Activated CD4-positive, alpha-beta memory T cell treated with anti-CD3 and anti-CD28 coated beads for 36 hours (primary cell): ENCODE measurements at regions of chr15 and their contacts with region 1.

Region 1: DNA sequence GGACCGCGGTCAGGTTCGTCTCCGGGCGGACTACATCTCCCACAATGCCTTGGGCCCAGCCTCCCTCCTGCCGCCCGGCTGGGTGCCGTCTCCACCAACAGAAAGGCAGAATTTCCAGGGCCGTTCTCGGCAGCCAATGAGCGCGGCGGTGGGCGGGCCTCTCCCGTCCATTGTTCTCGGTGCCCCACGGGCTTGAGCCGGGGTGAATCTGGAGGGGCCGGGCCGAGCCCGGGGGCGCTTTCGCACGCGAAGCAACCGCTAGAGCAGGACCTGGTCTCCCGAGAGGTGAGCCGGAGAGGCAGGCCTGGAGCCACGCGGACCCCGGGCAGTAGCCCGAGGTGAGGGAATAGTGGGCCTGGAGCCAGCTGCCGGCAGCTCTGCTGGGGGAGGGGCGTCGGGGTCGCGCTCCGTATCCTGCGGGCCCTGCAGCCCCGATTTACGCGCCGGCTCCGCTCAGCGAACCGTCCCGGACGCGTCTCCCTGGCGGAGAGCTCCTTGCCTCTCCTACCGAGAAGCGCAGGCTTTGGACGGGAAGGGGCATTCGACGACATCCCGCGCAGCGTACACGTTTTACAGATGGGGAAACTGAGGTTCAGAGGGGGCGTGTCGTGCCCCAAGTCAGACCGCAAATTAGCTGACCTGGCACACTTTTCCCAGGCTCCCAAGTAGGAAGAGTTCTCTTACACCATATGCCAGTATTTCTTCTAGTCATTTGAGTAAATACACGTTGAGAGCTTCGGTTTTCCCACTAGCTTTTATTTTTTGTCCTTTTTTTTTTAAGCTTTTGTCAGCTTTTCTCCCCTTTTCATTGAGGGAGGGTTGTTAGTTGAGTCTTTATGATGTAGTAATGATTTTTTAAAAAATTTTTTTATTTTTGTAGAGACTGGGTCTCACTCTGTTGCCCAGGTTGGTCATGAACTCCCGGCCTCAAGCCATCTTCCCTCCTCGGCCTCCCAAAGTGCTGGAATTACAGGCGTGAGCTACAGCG is at the start of gene ZSCAN2:
- DNase-seq: peak; percentile 97
- H3K4me3 Mint-ChIP-seq: peak within 1 kb of the TSS; percentile 91
- H3K27ac Mint-ChIP-seq: no peak within 1 kb of the TSS
- H3K4me1 Mint-ChIP-seq: peaks cover 59% of the 10 kb centered on the region
- H3K27me3 Mint-ChIP-seq: no peaks in the 10 kb centered on the region
- total RNA-seq, gene ZSCAN2: 7.5 to 9.5 TPM

Region 2: DNA sequence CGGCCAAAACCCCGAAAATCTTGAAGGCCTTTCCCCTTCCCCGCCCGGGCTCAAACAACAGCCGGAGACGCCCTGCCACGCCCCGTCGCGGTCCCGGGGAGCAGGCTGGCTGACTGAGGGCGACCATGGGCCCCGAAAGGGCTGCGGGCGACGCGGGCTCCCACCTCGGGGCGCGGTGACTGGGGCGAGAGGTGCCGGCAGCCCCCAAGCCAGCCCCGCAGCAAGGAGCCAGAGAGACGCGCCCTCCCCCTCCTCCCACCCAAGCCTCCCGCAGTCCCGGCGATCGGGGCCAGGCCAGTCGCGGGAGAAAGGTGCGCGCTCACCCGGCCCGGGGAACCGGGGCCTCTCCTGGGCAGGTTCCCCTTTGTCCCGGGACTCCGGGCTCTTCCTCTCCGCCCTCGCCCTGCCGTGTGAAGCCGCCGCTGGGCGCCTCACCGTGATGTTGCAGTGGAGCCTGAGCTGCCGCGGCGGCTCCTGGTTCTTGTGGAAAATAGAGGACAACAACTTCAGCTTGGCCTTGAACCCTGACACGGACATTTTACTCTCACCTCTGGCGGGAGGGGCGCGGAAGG is 30.9 kb before region 1 on chr15:
- CTCF ChIA-PET with region 1: interaction called, 9 read pairs
- POLR2A ChIA-PET with region 1: no interaction called
- intact Hi-C with region 1: loop called (anchors 1 kb)
- DNase-seq: peak; percentile 67
- H3K4me3 Mint-ChIP-seq: peak overlapping the region; percentile 84
- H3K27ac Mint-ChIP-seq: peak overlapping the region; percentile 60
- H3K4me1 Mint-ChIP-seq: peaks cover 14% of the 10 kb centered on the region
- H3K27me3 Mint-ChIP-seq: no peaks in the 10 kb centered on the region

Region 3: DNA sequence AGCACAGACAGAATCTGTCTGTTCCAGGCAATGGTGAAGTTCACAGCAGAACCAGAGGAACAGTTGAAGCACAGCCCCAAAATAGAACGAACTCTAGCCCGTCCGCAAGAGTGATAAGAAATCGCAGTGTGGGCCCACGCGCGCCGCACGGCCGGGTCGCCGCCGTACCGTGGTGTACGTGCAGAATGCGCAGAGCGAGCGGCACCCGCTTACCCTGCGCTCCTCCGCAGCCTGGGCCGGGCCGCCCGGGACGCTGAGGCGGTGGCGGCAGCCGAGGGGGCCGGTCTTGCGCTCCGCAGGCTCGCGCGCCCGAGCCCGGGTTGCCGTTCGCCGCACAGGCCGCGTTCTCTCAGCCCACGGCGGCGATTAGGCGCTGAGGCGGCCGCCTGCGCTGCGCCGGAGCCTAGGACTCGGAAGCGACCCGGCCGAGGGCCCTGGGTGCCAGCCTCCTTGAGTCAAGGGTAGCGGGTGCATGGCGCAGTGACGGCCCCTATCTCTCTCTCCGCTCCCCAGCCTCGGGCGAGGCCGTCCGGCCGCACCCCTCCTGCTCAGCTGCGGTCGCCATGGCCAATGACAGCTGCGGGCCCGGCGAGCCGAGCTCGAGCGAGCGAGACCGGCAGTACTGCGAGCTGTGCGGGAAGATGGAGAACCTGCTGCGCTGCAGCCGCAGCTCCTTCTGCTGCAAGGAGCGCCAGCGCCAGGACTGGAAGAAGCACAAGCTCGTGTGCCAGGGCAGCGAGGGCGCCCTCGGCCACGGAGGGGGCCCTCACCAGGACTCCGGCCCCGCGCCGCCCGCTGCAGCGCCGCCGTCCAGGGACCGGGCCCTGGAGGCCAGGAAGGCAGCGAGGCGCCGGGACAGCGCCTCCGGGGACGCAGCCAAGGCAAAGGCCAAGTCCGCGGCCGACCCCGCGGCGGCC is 32.4 kb after region 1 on chr15:
- CTCF ChIA-PET with region 1: interaction called, 24 read pairs
- POLR2A ChIA-PET with region 1: interaction called, 13 read pairs
- intact Hi-C with region 1: loop called (anchors 1 kb)
- DNase-seq: peak; percentile 73
- H3K4me3 Mint-ChIP-seq: peak overlapping the region; percentile 98
- H3K27ac Mint-ChIP-seq: peak overlapping the region; percentile 96
- H3K4me1 Mint-ChIP-seq: peaks cover 47% of the 10 kb centered on the region
- H3K27me3 Mint-ChIP-seq: no peaks in the 10 kb centered on the region

Region 4: DNA sequence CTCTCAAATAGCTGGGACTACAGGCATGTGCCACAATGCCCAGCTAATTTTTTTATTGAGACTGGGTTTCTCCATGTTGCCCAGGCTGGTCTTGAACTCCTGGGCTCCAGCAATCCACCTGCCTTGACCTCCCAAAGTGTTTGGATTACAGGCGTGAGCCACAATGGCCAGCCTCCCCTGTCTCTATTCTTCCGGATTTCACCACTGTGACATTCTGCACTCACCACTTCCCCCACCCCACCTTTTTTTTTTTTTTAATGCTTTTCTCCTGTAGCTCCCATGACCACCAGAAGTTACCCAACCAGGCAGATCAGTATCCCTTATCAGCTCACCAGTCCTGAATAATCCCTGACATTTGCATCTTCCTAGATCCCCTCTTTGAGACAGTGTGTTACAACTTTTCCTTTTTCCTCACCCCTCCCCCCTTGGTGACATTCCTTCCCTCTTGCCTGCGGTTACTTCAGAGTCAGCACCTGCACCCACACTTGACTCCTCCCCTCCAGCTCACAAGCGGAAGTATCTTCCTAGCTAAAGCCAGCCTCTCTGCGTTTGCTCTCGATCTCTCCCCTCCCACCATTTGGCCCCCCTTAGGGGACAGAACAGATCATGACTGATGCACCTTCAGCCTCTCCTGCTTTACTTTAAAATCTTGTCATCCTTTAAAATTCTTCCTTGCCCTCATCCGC is 133.8 kb after region 1 on chr15:
- CTCF ChIA-PET with region 1: interaction called, 6 read pairs
- POLR2A ChIA-PET with region 1: interaction called, 14 read pairs
- intact Hi-C with region 1: loop called (anchors 2 kb)
- DNase-seq: peak; percentile 86
- H3K4me3 Mint-ChIP-seq: peak overlapping the region; percentile 67
- H3K27ac Mint-ChIP-seq: peak overlapping the region; percentile 96
- H3K4me1 Mint-ChIP-seq: peaks cover 61% of the 10 kb centered on the region
- H3K27me3 Mint-ChIP-seq: no peaks in the 10 kb centered on the region

Region 5: DNA sequence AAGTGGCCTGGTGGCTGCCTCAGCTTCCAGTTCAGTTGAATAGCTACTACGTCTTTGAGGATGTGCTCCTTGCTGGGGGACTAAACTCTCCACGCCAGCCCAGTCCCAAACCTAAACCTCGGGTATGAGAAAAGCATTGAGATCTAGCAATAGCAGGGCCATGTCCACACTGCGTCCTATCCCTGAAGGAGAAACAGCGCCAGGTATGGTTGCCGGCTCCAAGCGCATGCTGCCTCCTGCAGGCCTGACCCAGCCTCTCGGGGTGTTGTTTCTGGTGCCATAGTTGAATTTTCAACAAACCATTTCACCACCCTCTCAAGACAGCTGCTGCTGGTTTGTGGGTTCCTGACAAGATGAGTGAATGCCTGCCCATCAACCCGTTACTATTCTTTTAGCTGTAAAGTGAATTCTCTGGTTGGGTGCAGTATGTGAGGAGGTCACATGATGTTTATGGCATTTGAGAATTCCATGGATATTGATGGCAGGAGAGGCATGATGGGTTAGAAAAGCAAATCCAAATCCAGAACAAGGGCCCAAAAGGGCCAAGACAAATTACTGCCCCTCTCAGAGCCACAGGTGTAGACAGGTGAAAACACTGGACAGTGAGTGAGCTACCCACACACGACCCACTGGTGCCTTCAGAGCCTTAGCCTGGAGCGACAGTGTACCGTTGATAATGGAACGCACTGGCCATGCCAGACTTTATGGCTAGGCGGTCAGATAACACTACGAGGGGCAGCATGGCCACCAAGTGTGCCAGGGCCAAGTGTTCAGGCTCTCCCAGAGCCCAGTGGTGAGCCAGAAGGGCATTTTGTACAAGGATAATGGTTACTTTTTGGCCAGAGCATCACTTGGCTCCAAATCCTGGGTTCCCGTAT is 270.5 kb after region 1 on chr15:
- CTCF ChIA-PET with region 1: interaction called, 20 read pairs
- POLR2A ChIA-PET with region 1: no interaction called
- intact Hi-C with region 1: no loop called
- DNase-seq: no peak
- H3K4me3 Mint-ChIP-seq: no peak overlapping the region
- H3K27ac Mint-ChIP-seq: no peak overlapping the region
- H3K4me1 Mint-ChIP-seq: no peaks in the 10 kb centered on the region
- H3K27me3 Mint-ChIP-seq: no peaks in the 10 kb centered on the region

Region 6: GRCh38 chr15:84929744-84930371 is 328.7 kb after region 1 on chr15:
- CTCF ChIA-PET with region 1: interaction called, 15 read pairs
- POLR2A ChIA-PET with region 1: no interaction called
- intact Hi-C with region 1: loop called (anchors 1 kb)
- DNase-seq: peak; percentile 46
- H3K4me3 Mint-ChIP-seq: no peak overlapping the region
- H3K27ac Mint-ChIP-seq: peak overlapping the region; percentile 44
- H3K4me1 Mint-ChIP-seq: peaks cover 8% of the 10 kb centered on the region
- H3K27me3 Mint-ChIP-seq: peaks cover 2% of the 10 kb centered on the region

Region 7: GRCh38 chr15:85044251-85044853 is 443.2 kb after region 1 on chr15:
- CTCF ChIA-PET with region 1: no interaction called
- POLR2A ChIA-PET with region 1: no interaction called
- intact Hi-C with region 1: loop called (anchors 10 kb)
- DNase-seq: peak; percentile 58
- H3K4me3 Mint-ChIP-seq: no peak overlapping the region
- H3K27ac Mint-ChIP-seq: no peak overlapping the region
- H3K4me1 Mint-ChIP-seq: peaks cover 14% of the 10 kb centered on the region
- H3K27me3 Mint-ChIP-seq: no peaks in the 10 kb centered on the region